Activated CD4-positive, alpha-beta T cell treated with anti-CD3 and anti-CD28 coated beads, Interleukin-2, amount 10 ng/mL, durations not matched to agents 24 days and 14 days (primary cell): ENCODE measurements at regions of chr4 and their contacts with region 1.

Region 1: DNA sequence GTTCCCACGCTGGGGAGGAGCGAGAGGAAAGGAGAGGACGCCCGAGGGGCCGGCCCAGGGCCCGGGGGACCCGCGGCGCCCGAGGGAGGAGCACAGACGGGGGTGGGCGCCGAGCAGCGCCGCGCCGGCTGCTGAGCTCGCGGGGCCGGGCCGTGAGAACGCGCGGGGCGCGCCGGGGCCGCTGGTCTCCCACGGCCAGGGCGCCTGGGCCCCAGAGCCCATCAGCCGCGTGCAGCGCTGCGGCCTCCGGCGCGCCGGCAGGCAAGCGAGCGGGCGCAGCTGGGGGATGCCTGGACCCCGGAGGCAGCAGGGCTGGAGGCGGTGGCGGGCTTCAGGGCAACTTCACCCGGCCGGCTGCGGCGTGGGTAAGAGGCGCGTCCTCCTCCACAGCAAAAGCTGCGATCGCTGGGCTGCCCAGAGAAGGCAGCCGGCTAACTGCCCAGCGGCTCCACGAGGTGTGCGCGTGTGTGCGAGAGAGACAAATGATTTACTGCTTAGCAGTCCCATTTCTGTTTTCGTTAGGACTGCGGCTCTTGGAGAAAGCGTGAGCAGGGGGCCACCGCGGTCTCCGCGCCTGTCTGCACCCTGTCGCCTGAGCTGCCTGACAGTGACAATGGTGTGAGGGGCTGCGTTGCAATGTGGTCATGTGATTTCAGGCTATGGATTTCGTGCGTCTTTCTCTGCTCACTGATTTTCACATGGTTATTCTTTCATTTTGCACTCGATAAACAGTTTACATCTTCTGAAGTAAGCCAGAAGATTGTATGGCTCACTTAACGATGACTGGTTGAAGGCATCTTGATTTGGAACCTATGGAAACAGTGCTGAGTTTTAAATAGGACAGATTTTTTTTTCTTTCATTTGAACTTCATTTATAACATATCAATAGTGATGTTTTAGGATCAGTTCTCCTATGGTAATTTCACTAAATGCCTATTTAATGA is 1.2 kb downstream of the GUCY1A1 start:
- DNase-seq: peak; percentile 60
- H3K4me3 Mint-ChIP-seq: peak overlapping the region; percentile 94
- H3K27ac Mint-ChIP-seq: no peak overlapping the region
- H3K4me1 Mint-ChIP-seq: peaks cover 15% of the 10 kb centered on the region
- H3K27me3 Mint-ChIP-seq: peaks cover 72% of the 10 kb centered on the region

Region 2: GRCh38 chr4:155376387-155377268 is 291.2 kb before region 1 on chr4 and contains the start of gene MAP9:
- intact Hi-C with region 1: loop called (anchors 10 kb)
- DNase-seq: peak; percentile 95
- H3K4me3 Mint-ChIP-seq: peak within 1 kb of the TSS; percentile 84
- H3K27ac Mint-ChIP-seq: peak within 1 kb of the TSS; percentile 76
- H3K4me1 Mint-ChIP-seq: peaks cover 12% of the 10 kb centered on the region
- H3K27me3 Mint-ChIP-seq: peaks cover 6% of the 10 kb centered on the region
- total RNA-seq, gene MAP9: 6.1 and 6.9 TPM in 2 replicates

Region 3: GRCh38 chr4:155473420-155474095 is 194.3 kb before region 1 on chr4:
- intact Hi-C with region 1: no loop called
- DNase-seq: no peak
- H3K4me3 Mint-ChIP-seq: no peak overlapping the region
- H3K27ac Mint-ChIP-seq: no peak overlapping the region
- H3K4me1 Mint-ChIP-seq: no peaks in the 10 kb centered on the region
- H3K27me3 Mint-ChIP-seq: peaks cover 2% of the 10 kb centered on the region

Region 4: DNA sequence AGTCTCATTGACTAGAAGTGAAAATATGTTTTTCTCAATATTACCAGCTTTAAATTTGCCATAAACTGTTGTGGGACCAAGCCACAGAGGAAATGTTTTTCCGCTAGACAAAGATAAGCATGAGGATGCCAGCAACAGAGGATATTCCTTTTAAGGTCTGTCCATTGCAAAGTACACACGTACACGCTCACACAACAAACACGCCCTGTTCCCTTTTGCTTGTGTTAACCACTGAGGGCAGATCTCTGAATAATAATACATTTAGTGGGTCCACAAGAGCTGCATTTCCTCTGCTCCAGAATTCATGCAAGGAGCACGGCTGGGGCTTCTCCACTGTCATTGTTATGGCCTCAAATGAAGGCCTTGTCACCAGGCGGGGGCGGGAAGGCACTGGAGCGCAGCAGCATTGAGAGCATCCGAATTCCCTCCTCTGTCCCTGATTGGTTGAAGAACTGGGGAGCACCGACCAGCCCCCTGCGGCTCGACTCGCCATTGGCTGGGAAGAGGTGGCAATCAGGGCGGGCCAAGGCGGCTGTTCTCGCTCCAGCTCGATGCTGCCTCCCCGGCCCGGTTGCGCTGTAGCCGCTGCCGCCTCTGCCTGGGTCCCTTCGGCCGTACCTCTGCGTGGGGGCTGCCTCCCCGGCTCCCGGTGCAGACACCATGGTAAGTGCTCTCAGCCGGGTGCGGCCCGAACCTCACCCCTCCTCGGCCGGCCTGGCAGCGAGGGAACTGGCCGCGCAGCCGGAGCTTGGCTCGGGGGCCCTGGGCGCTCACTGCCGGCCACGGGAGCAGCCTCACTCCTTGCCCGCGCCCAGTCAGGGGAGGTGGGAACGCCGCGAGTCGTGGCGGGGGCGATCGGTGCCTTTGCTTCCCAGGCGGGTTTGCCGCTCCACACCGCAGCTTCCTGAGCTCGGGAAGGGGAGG is 90.9 kb after region 1 on chr4 and contains the start of gene GUCY1B1:
- intact Hi-C with region 1: loop called (anchors 5 kb)
- DNase-seq: peak; percentile 90
- H3K4me3 Mint-ChIP-seq: peak within 1 kb of the TSS; percentile 34
- H3K27ac Mint-ChIP-seq: no peak within 1 kb of the TSS
- H3K4me1 Mint-ChIP-seq: peaks cover 5% of the 10 kb centered on the region
- H3K27me3 Mint-ChIP-seq: peaks cover 25% of the 10 kb centered on the region
- total RNA-seq, gene GUCY1B1: 0.37 and 0.66 TPM in 2 replicates